Calu3 (cell line): ENCODE measurements at regions of chr7 and their contacts with region 1.

Region 1: DNA sequence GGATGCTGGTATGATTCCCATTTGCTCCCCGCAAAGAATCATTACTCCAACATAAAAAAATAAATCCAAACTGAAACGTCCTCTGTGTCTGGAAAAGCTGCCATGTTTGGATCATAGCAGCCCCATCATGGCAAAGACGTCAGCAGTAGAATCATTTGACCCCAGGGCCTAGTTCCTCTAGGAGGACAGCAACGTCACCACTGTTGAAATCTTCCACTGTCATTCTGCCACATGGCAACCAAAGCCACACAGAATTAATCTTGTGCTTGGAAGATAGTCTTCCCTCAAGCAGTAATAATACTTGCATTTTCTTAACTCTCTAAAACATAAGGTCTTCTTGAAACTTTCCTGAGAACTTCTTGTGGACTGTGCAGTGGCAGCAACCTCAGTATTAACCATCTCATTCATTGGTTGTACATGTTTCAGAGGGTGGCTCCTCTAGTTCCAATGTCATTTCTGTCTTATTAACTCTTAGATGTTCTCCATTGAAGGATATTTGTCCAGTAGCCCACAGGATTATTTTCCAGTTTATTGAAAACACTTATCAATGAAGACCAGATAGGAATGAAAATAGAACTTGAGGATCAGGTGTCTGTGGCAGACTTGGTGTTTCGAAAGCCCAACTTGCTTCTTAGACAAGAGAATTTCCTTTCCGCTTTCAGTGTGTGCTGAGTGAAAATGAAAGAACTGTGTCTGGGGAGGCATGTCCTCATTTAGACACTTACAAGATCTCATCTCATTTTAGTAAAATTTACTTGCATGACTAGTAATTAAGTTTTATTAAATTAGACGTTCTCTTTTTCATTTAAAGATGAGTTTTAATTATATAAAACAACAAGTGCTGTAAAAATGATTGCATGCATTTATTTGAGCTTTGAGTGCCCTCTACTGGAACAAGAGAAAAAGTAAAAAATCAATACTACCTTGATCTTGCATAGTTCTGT is 28.9 kb upstream of the INHBA start:
- DNase-seq: no peak
- H3K4me3 Mint-ChIP-seq: no peak overlapping the region
- H3K27ac Mint-ChIP-seq: no peak overlapping the region
- H3K4me1 Mint-ChIP-seq: peaks cover 8% of the 10 kb centered on the region
- H3K27me3 Mint-ChIP-seq: peaks cover 28% of the 10 kb centered on the region
- CTCF ChIP-seq: peak; percentile 57

Region 2: GRCh38 chr7:40232242-40232893 is 1499.4 kb before region 1 on chr7:
- CTCF ChIA-PET with region 1: interaction called, 6 read pairs
- intact Hi-C with region 1: loop called (anchors 1 kb)
- DNase-seq: peak; percentile 57
- H3K4me3 Mint-ChIP-seq: no peak overlapping the region
- H3K27ac Mint-ChIP-seq: no peak overlapping the region
- H3K4me1 Mint-ChIP-seq: peaks cover 9% of the 10 kb centered on the region
- H3K27me3 Mint-ChIP-seq: no peaks in the 10 kb centered on the region
- CTCF ChIP-seq: peak; percentile 62